AG04450 (cell line): ENCODE measurements at regions of chr12 and their contacts with region 1.

Region 1: GRCh38 chr12:15268927-15269552 is 47.8 kb upstream of the RERG start:
- DNase-seq: peak; percentile 23
- H3K4me3 ChIP-seq: no peak overlapping the region
- H3K27ac ChIP-seq: no peak overlapping the region
- H3K27me3 ChIP-seq: no peaks in the 10 kb centered on the region
- CTCF ChIP-seq: peak; percentile 94

Region 2: DNA sequence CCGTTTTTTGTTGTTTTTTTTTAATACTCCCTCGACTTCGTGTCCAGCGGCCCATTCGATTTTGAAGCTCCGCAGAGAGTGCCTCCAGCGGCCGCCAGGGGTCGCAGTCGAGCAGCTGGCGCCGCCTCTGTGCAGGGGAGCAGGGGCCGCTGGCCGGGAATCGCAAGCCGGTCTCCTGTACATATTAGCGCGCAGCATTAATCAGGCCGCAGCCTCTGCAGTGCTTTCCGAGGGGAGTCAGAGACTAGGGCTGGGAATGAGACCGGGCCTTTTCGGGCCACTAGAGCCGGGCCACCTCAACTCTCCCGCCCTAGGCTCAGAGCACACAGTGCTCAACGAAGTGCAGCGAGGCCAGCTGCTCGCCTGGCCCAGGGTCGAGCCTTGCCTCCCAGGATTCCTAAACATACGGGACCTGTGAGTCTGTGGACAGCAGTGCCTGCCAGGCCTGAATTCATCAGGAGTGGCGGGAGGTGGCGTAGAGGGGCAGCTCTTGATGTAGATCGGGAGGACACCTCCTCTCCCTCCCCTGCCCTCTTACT is 1990.7 kb before region 1 on chr12:
- CTCF ChIA-PET with region 1: no interaction called
- POLR2A ChIA-PET with region 1: no interaction called
- DNase-seq: peak; percentile 36
- H3K4me3 ChIP-seq: 0 out of 2 replicates have a peak overlapping the region, but pooled peaks have one; percentile 17
- H3K27ac ChIP-seq: no peak overlapping the region
- H3K27me3 ChIP-seq: peaks cover 41% of the 10 kb centered on the region
- CTCF ChIP-seq: peak; percentile 98

Region 3: GRCh38 chr12:15227004-15227679 is 41.9 kb before region 1 on chr12:
- CTCF ChIA-PET with region 1: interaction called, 14 read pairs
- POLR2A ChIA-PET with region 1: no interaction called
- DNase-seq: no peak
- H3K4me3 ChIP-seq: no peak overlapping the region
- H3K27ac ChIP-seq: no peak overlapping the region
- H3K27me3 ChIP-seq: no peaks in the 10 kb centered on the region
- CTCF ChIP-seq: peak; percentile 69